K562 (cell line): ENCODE measurements at regions of chr20 and their contacts with region 1.

Region 1: GRCh38 chr20:34538671-34539123 is 19.8 kb upstream of the MAP1LC3A start:
- DNase-seq: peak; percentile 69 to 84 (median 76)
- ATAC-seq: peak; percentile 91
- H3K4me3 ChIP-seq: no peak overlapping the region
- H3K27ac ChIP-seq: no peak overlapping the region
- H3K4me1 ChIP-seq: peaks cover 0 to 3% of the 10 kb centered on the region in 2 experiments; a peak in 1 of 5 replicates
- H3K27me3 ChIP-seq: no peaks in the 10 kb centered on the region
- CTCF ChIP-seq: peak; percentile 82 to 91 (median 85)
- EP300 ChIP-seq: 0 out of 2 replicates have a peak, but pooled peaks have one; percentile 19
- POLR2A ChIP-seq: no peak
- RAD21 ChIP-seq: peak; percentile 55 to 85

Region 2: GRCh38 chr20:34250005-34250404 is 288.7 kb before region 1 on chr20:
- CTCF ChIA-PET with region 1: no interaction called
- POLR2A ChIA-PET with region 1: no interaction called
- in situ Hi-C with region 1: no loop called
- intact Hi-C with region 1: loop called (anchors 5 kb)
- DNase-seq: no peak
- ATAC-seq: no peak
- H3K4me3 ChIP-seq: no peak overlapping the region
- H3K27ac ChIP-seq: no peak overlapping the region
- H3K4me1 ChIP-seq: peaks cover 6 to 15% of the 10 kb centered on the region in 2 experiments; a peak in 3 of 5 replicates
- H3K27me3 ChIP-seq: no peaks in the 10 kb centered on the region
- CTCF ChIP-seq: no peak
- EP300 ChIP-seq: no peak
- POLR2A ChIP-seq: no peak
- RAD21 ChIP-seq: no peak

Region 3: DNA sequence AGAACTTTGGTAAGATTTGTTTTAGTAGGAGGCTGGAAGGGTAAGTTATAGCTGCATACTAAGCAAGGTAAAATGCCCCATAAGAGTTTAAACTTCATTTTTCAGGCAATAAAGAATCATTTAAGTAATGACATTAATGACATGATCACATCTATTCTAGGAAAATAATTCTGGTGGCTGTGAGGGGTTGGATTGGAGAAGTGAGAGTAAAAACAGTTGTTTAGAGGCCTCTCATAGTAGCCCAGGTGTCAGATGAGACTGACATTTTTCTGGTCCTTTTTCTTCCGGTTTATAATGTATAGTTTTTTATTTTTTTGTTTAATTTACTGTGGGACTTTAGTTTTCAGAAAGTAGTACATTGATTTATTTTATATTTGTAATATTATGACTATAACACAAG is 134.8 kb before region 1 on chr20:
- CTCF ChIA-PET with region 1: no interaction called
- POLR2A ChIA-PET with region 1: no interaction called
- in situ Hi-C with region 1: no loop called
- intact Hi-C with region 1: no loop called
- DNase-seq: no peak
- ATAC-seq: no peak
- H3K4me3 ChIP-seq: no peak overlapping the region
- H3K27ac ChIP-seq: no peak overlapping the region
- H3K4me1 ChIP-seq: no peaks in the 10 kb centered on the region
- H3K27me3 ChIP-seq: no peaks in the 10 kb centered on the region
- CTCF ChIP-seq: no peak
- EP300 ChIP-seq: no peak
- POLR2A ChIP-seq: no peak
- RAD21 ChIP-seq: no peak

Region 4: GRCh38 chr20:34704177-34705007 is 165.7 kb after region 1 on chr20 and contains the start of gene TP53INP2:
- CTCF ChIA-PET with region 1: interaction called, 5 read pairs
- POLR2A ChIA-PET with region 1: interaction called, 7 read pairs
- in situ Hi-C with region 1: loop called (anchors 10 kb)
- intact Hi-C with region 1: loop called (anchors 1 kb)
- DNase-seq: peak; percentile 95 to 96 (median 95)
- ATAC-seq: peak; percentile 76
- H3K4me3 ChIP-seq: peak within 1 kb of the TSS; percentile 92
- H3K27ac ChIP-seq: peak within 1 kb of the TSS; percentile 92
- H3K4me1 ChIP-seq: peaks cover 16 to 28% of the 10 kb centered on the region in 2 experiments
- H3K27me3 ChIP-seq: no peaks in the 10 kb centered on the region
- CTCF ChIP-seq: no peak
- EP300 ChIP-seq: no peak
- POLR2A ChIP-seq: 0 out of 2 replicates have a peak, but pooled peaks have one; percentile 42
- RAD21 ChIP-seq: no peak
- polyA plus RNA-seq, gene TP53INP2: 1.0 to 1.1 TPM

Region 5: DNA sequence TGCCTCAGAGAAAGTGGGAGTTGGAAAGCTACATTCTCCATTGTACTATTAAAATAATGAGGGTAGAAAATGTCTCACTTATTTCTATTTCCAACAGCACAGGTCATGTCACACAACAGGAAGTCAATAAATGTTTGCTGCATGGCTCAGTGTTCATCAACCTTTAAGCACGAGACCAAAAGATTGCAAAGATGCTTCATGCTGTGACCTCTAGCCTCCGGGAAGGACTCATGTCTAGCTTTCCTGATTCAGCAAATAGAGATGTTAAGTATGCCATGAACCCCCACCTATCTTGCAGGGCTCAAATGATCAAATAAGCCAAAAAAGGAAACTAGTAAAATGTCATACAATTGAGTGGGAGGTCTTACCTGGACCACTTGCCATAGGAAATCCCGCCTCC is 229.4 kb after region 1 on chr20:
- CTCF ChIA-PET with region 1: interaction called, 4 read pairs
- POLR2A ChIA-PET with region 1: interaction called, 4 read pairs
- in situ Hi-C with region 1: no loop called
- intact Hi-C with region 1: loop called (anchors 5 kb)
- DNase-seq: no peak
- ATAC-seq: no peak
- H3K4me3 ChIP-seq: no peak overlapping the region
- H3K27ac ChIP-seq: no peak overlapping the region
- H3K4me1 ChIP-seq: peaks cover 0 to 3% of the 10 kb centered on the region in 2 experiments; a peak in 2 of 5 replicates
- H3K27me3 ChIP-seq: no peaks in the 10 kb centered on the region
- CTCF ChIP-seq: no peak
- EP300 ChIP-seq: no peak
- POLR2A ChIP-seq: no peak
- RAD21 ChIP-seq: no peak